ENCODE measurements at regions of chr1 and their contacts with region 1.

Region 1: GRCh38 chr1:67149179-67149770 is 14.5 kb upstream of the C1orf141 start:
- DNase-seq: peak; percentile 87

Region 2: DNA sequence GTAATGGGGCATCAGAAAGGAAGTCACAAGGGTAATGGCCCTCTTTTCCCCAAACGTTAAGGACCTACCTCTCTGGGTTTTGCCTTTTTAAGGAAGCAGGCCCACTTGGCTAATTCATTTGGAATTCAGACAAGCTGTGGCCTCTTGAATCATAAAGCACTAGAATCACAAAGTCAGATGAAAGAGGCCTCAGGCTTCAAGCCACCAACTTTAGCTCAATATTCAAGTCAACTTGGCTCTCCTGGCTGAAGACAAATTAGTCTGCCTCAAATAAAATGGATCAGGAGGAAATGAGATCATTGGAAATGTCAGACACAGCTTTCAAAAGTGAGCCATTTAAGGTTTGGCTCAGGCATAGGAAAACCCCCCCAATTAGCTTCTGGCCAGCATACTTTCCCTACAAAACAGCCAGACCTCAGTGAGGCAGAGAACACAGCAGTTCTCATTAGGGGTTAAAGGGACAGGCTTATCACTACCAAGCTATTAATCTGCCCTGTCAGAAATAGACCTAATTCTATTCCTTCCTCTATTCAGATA is 129.6 kb before region 1 on chr1:
- in situ Hi-C with region 1: loop called (anchors 25 kb)
- DNase-seq: no peak

Measured in KBM-7 (cell line).